ENCODE measurements at regions of chr4 and their contacts with region 1.

Region 1: GRCh38 chr4:167021545-167022155 is 212.6 kb downstream of the SPOCK3 start:
- DNase-seq: peak; percentile 30
- ATAC-seq: peak; percentile 75
- H3K4me3 ChIP-seq: no peak overlapping the region
- H3K27ac ChIP-seq: no peak overlapping the region
- H3K4me1 ChIP-seq: no peaks in the 10 kb centered on the region
- H3K27me3 ChIP-seq: no peaks in the 10 kb centered on the region
- CTCF ChIP-seq: peak; percentile 70 to 75 (median 74)
- EP300 ChIP-seq: no peak
- POLR2A ChIP-seq: no peak
- RAD21 ChIP-seq: peak; percentile 76

Region 2: GRCh38 chr4:166737430-166737829 is 284.2 kb before region 1 on chr4:
- CTCF ChIA-PET with region 1: no interaction called
- POLR2A ChIA-PET with region 1: no interaction called
- RAD21 ChIA-PET with region 1: no interaction called
- SMC1A ChIA-PET with region 1: no interaction called
- in situ Hi-C with region 1: no loop called
- intact Hi-C with region 1: no loop called
- DNase-seq: no peak
- ATAC-seq: no peak
- H3K4me3 ChIP-seq: no peak overlapping the region
- H3K27ac ChIP-seq: no peak overlapping the region
- H3K4me1 ChIP-seq: no peaks in the 10 kb centered on the region
- H3K27me3 ChIP-seq: no peaks in the 10 kb centered on the region
- CTCF ChIP-seq: no peak
- EP300 ChIP-seq: no peak
- POLR2A ChIP-seq: no peak
- RAD21 ChIP-seq: no peak

Region 3: GRCh38 chr4:166839615-166840251 is 181.9 kb before region 1 on chr4:
- CTCF ChIA-PET with region 1: interaction called, 8 read pairs
- POLR2A ChIA-PET with region 1: no interaction called
- RAD21 ChIA-PET with region 1: interaction called, 3 read pairs
- SMC1A ChIA-PET with region 1: interaction called, 3 read pairs
- in situ Hi-C with region 1: no loop called
- intact Hi-C with region 1: loop called (anchors 5 kb)
- DNase-seq: peak; percentile 85
- ATAC-seq: peak; percentile 90
- H3K4me3 ChIP-seq: peak overlapping the region; percentile 23; the same call in 1 of the 2 replicates
- H3K27ac ChIP-seq: peak overlapping the region; percentile 72
- H3K4me1 ChIP-seq: no peaks in the 10 kb centered on the region
- H3K27me3 ChIP-seq: no peaks in the 10 kb centered on the region
- CTCF ChIP-seq: 0 out of 6 replicates have a peak, but pooled peaks of 1 of the 3 experiments have one; percentile 11
- EP300 ChIP-seq: peak; percentile 93 to 97
- POLR2A ChIP-seq: no peak
- RAD21 ChIP-seq: peak; percentile 28; the same call in 1 of the 2 replicates

Region 4: GRCh38 chr4:167100120-167100519 is 78.5 kb after region 1 on chr4:
- CTCF ChIA-PET with region 1: no interaction called
- POLR2A ChIA-PET with region 1: no interaction called
- RAD21 ChIA-PET with region 1: no interaction called
- SMC1A ChIA-PET with region 1: interaction called, 3 read pairs
- in situ Hi-C with region 1: no loop called
- intact Hi-C with region 1: loop called (anchors 5 kb)
- DNase-seq: peak; percentile 32
- ATAC-seq: peak; percentile 94
- H3K4me3 ChIP-seq: no peak overlapping the region
- H3K27ac ChIP-seq: no peak overlapping the region
- H3K4me1 ChIP-seq: no peaks in the 10 kb centered on the region
- H3K27me3 ChIP-seq: no peaks in the 10 kb centered on the region
- CTCF ChIP-seq: no peak
- EP300 ChIP-seq: no peak
- POLR2A ChIP-seq: no peak
- RAD21 ChIP-seq: no peak

Region 5: GRCh38 chr4:167144605-167145004 is 123.0 kb after region 1 on chr4:
- CTCF ChIA-PET with region 1: no interaction called
- POLR2A ChIA-PET with region 1: no interaction called
- RAD21 ChIA-PET with region 1: no interaction called
- SMC1A ChIA-PET with region 1: no interaction called
- in situ Hi-C with region 1: no loop called
- intact Hi-C with region 1: no loop called
- DNase-seq: no peak
- ATAC-seq: no peak
- H3K4me3 ChIP-seq: no peak overlapping the region
- H3K27ac ChIP-seq: no peak overlapping the region
- H3K4me1 ChIP-seq: no peaks in the 10 kb centered on the region
- H3K27me3 ChIP-seq: no peaks in the 10 kb centered on the region
- CTCF ChIP-seq: no peak
- EP300 ChIP-seq: no peak
- POLR2A ChIP-seq: no peak
- RAD21 ChIP-seq: no peak

Region 6: GRCh38 chr4:167290678-167291077 is 269.0 kb after region 1 on chr4:
- CTCF ChIA-PET with region 1: interaction called, 25 read pairs
- POLR2A ChIA-PET with region 1: no interaction called
- RAD21 ChIA-PET with region 1: interaction called, 13 read pairs
- SMC1A ChIA-PET with region 1: interaction called, 12 read pairs
- in situ Hi-C with region 1: loop called (anchors 5 kb)
- intact Hi-C with region 1: loop called (anchors 1 kb)
- DNase-seq: no peak
- ATAC-seq: peak; percentile 44; the same call in 2 of the 3 replicates
- H3K4me3 ChIP-seq: no peak overlapping the region
- H3K27ac ChIP-seq: no peak overlapping the region
- H3K4me1 ChIP-seq: no peaks in the 10 kb centered on the region
- H3K27me3 ChIP-seq: no peaks in the 10 kb centered on the region
- CTCF ChIP-seq: peak in 2 of 3 experiments; percentile 9 to 43; a peak in 1 of 6 replicates
- EP300 ChIP-seq: no peak
- POLR2A ChIP-seq: no peak
- RAD21 ChIP-seq: peak; percentile 66

Region 7: GRCh38 chr4:168076989-168077725 is 1055.5 kb after region 1 on chr4:
- CTCF ChIA-PET with region 1: no interaction called
- POLR2A ChIA-PET with region 1: no interaction called
- RAD21 ChIA-PET with region 1: no interaction called
- SMC1A ChIA-PET with region 1: no interaction called
- in situ Hi-C with region 1: loop called (anchors 10 kb)
- intact Hi-C with region 1: loop called (anchors 1 kb)
- DNase-seq: peak; percentile 16
- ATAC-seq: peak; percentile 85
- H3K4me3 ChIP-seq: no peak overlapping the region
- H3K27ac ChIP-seq: no peak overlapping the region
- H3K4me1 ChIP-seq: no peaks in the 10 kb centered on the region
- H3K27me3 ChIP-seq: no peaks in the 10 kb centered on the region
- CTCF ChIP-seq: peak; percentile 80 to 91 (median 86)
- EP300 ChIP-seq: no peak
- POLR2A ChIP-seq: no peak
- RAD21 ChIP-seq: peak; percentile 92